CD8-positive, alpha-beta T cell (primary cell): ENCODE measurements at regions of chrX and their contacts with region 1.

Region 1: DNA sequence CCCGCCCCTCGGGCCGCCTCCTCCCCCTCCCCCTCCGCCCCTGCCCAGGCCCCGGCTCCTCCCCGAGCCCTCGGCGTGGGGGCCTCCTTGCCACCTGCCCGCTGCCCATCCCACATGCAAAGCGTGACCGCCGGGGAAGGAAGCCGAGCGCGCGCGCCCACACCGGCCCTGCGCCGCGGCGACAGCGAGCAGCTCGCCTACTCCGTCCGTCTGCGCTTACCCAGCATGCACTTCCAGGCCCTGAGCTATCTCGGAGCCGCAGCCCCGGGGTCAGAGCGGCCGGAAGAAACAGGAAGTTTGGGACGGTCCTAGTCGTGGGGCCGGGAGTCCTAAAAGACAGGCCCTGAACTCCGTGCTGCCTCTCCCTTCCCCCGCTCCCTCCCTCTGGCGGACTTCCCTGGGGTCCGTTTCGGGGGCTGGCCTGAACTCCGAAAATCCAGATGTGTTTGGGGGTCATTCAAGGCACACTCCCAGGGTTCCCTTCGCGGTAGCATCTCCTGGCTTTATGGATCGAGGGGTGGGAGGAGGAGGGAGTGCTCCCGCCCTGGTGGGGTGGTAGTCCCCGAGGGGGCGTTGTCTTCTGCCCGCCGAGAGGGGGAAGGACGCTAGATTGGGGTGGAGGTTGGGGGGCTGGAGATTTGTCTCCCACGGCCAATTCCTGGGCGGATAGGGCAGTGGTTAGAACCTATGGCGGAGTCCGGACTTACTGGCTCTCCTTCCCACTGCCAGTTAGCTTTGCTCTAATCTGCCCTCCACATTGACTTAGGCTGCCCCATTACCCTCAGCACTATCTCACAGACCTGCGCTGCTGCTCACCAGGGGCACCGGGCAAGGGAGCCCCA is 25.0 kb upstream of the BCORL1 start:
- DNase-seq: peak in 3 of 9 experiments; percentile 3 to 59 (median 52)
- ATAC-seq: peak; percentile 12
- H3K4me3 ChIP-seq: peak overlapping the region; percentile 43 to 49
- H3K4me3 Mint-ChIP-seq: peak overlapping the region; percentile 69
- H3K27ac ChIP-seq: peak overlapping the region; percentile 23 to 49
- H3K27ac Mint-ChIP-seq: peak overlapping the region; percentile 55
- H3K4me1 ChIP-seq: peaks cover 22% of the 10 kb centered on the region
- H3K4me1 Mint-ChIP-seq: peaks cover 37% of the 10 kb centered on the region
- H3K27me3 ChIP-seq: no peaks in the 10 kb centered on the region
- H3K27me3 Mint-ChIP-seq: no peaks in the 10 kb centered on the region
- CTCF ChIP-seq: no peak

Region 2: DNA sequence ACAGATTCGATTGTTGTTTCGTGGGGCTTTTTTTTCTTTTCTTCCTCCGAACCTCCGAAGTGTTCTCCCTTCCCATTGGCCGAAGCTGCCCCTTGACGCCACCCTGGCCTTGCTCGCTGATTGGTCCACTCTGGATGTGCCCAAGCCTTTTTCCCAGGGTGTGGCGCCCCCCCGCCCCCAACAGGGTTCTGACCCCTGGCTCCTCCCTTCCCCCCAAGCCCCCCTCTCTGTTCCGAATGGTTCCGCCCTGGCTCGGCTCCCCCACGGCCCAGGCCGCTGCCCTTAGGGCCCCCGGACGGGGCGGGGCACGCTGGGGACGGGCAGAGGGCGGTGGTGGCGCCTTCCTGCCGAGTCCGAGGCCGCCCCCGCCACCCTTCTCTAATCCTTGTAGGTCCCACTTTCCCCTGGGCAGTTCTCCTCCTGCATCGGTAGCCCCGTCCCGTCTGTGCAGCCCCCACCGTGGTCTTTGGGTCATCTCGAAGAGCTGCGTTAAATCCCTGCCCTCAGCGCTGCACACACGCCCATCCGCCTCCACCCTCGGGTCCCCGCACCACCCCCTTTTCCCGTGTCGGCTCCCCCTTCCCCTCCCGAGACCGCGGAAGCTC is 25.9 kb before region 1 on chrX:
- CTCF ChIA-PET with region 1: interaction called, 11 read pairs
- POLR2A ChIA-PET with region 1: no interaction called
- intact Hi-C with region 1: loop called in 1 of 2 experiments (anchors 1 kb)
- DNase-seq: peak; percentile 26 to 82 (median 55)
- ATAC-seq: peak; percentile 50
- H3K4me3 ChIP-seq: peak overlapping the region; percentile 58 to 70
- H3K4me3 Mint-ChIP-seq: peak overlapping the region; percentile 75
- H3K27ac ChIP-seq: peak overlapping the region in 1 of 2 experiments; percentile 77
- H3K27ac Mint-ChIP-seq: peak overlapping the region; percentile 88
- H3K4me1 ChIP-seq: no peaks in the 10 kb centered on the region
- H3K4me1 Mint-ChIP-seq: peaks cover 8% of the 10 kb centered on the region
- H3K27me3 ChIP-seq: no peaks in the 10 kb centered on the region
- H3K27me3 Mint-ChIP-seq: no peaks in the 10 kb centered on the region
- CTCF ChIP-seq: no peak